Activated B cell treated with CpG ODN at 0.5 μM for 24 hours (primary cell): ENCODE measurements at regions of chr21 and their contacts with region 1.

Region 1: DNA sequence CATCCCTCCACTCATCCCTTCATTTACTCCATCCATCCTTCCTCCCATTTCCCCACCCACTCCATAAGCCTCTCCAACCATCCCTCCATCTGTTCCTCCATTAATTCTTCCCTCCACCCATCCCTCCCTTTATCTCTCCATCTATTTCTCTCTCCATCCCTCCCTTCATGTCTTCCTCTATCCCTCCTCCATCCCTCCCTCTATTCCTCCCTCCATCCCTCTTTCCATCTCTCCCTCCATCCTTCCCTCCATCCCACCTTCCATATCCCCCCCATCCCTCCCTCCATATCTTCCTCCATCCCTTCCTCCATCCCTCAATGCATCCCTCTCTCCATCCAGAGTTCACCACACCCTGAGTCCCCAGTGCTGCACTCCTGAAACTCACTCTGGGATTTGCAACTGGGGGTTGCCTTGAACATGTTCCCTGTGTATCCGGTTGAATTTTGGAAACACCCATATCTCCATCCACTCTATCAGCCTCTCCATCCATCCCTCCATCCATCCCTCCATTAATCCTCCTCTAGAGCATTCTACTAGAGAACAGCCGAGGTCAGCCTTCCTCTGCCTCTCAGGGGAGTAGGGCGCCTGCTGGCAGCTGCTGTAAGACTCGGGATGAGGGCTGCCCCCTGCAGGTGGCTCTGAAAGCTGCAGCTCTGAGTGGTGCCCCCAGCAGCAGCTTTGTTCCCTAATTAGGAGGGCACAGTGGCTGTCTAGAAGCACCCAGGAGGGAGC is 39.4 kb downstream of the ABCG1 start:
- DNase-seq: peak; percentile 73
- ATAC-seq: peak; percentile 97
- H3K4me3 Mint-ChIP-seq: peak overlapping the region; percentile 1
- H3K27ac Mint-ChIP-seq: no peak overlapping the region
- H3K4me1 Mint-ChIP-seq: peaks cover 43% of the 10 kb centered on the region
- H3K27me3 Mint-ChIP-seq: no peaks in the 10 kb centered on the region
- CTCF ChIP-seq: peak; percentile 78

Region 2: GRCh38 chr21:41768437-41769061 is 489.8 kb before region 1 on chr21:
- CTCF ChIA-PET with region 1: no interaction called
- POLR2A ChIA-PET with region 1: no interaction called
- intact Hi-C with region 1: no loop called
- DNase-seq: no peak
- ATAC-seq: no peak
- H3K4me3 Mint-ChIP-seq: peak overlapping the region; percentile 74
- H3K27ac Mint-ChIP-seq: no peak overlapping the region
- H3K4me1 Mint-ChIP-seq: peaks cover 22% of the 10 kb centered on the region
- H3K27me3 Mint-ChIP-seq: peaks cover 79% of the 10 kb centered on the region
- CTCF ChIP-seq: no peak

Region 3: GRCh38 chr21:42145569-42146272 is 112.6 kb before region 1 on chr21:
- CTCF ChIA-PET with region 1: interaction called, 103 read pairs
- POLR2A ChIA-PET with region 1: interaction called, 3 read pairs
- intact Hi-C with region 1: loop called (anchors 1 kb)
- DNase-seq: peak; percentile 36
- ATAC-seq: peak; percentile 86
- H3K4me3 Mint-ChIP-seq: no peak overlapping the region
- H3K27ac Mint-ChIP-seq: no peak overlapping the region
- H3K4me1 Mint-ChIP-seq: peaks cover 7% of the 10 kb centered on the region
- H3K27me3 Mint-ChIP-seq: no peaks in the 10 kb centered on the region
- CTCF ChIP-seq: no peak

Region 4: GRCh38 chr21:42164064-42164789 is 94.1 kb before region 1 on chr21:
- CTCF ChIA-PET with region 1: interaction called, 100 read pairs
- POLR2A ChIA-PET with region 1: no interaction called
- intact Hi-C with region 1: loop called (anchors 1 kb)
- DNase-seq: no peak
- ATAC-seq: peak; percentile 76
- H3K4me3 Mint-ChIP-seq: no peak overlapping the region
- H3K27ac Mint-ChIP-seq: no peak overlapping the region
- H3K4me1 Mint-ChIP-seq: peaks cover 14% of the 10 kb centered on the region
- H3K27me3 Mint-ChIP-seq: peaks cover 3% of the 10 kb centered on the region
- CTCF ChIP-seq: no peak

Region 5: GRCh38 chr21:42220138-42220701 is 38.1 kb before region 1 on chr21:
- CTCF ChIA-PET with region 1: interaction called, 14 read pairs
- POLR2A ChIA-PET with region 1: no interaction called
- intact Hi-C with region 1: loop called (anchors 2 kb)
- DNase-seq: peak; percentile 50
- ATAC-seq: peak; percentile 84
- H3K4me3 Mint-ChIP-seq: peak overlapping the region; percentile 87
- H3K27ac Mint-ChIP-seq: peak overlapping the region; percentile 73
- H3K4me1 Mint-ChIP-seq: peaks cover 39% of the 10 kb centered on the region
- H3K27me3 Mint-ChIP-seq: no peaks in the 10 kb centered on the region
- CTCF ChIP-seq: no peak

Region 6: GRCh38 chr21:42238185-42238934 is 20.0 kb before region 1 on chr21:
- CTCF ChIA-PET with region 1: interaction called, 18 read pairs
- POLR2A ChIA-PET with region 1: interaction called, 4 read pairs
- intact Hi-C with region 1: no loop called
- DNase-seq: no peak
- ATAC-seq: no peak
- H3K4me3 Mint-ChIP-seq: peak overlapping the region; percentile 9
- H3K27ac Mint-ChIP-seq: no peak overlapping the region
- H3K4me1 Mint-ChIP-seq: peaks cover 72% of the 10 kb centered on the region
- H3K27me3 Mint-ChIP-seq: no peaks in the 10 kb centered on the region
- CTCF ChIP-seq: no peak

Region 7: DNA sequence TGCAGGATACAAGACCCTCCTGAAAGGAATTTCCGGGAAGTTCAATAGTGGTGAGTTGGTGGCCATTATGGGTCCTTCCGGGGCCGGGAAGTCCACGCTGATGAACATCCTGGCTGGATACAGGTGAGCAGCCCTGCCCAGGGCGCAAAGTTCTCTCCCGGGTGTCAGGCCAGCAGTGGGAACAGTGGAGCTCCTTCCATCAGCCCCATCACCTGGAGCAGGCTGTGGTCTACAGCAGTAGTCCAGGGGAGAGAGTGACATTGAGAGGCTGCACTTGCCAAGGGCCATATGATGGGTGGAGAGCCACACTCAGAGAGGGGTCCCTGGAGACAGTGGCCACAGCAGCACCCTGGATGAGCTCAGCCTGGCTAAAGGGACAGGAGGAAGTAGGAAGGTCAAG is 12.7 kb after region 1 on chr21:
- CTCF ChIA-PET with region 1: interaction called, 15 read pairs
- POLR2A ChIA-PET with region 1: interaction called, 4 read pairs
- intact Hi-C with region 1: no loop called
- DNase-seq: no peak
- ATAC-seq: no peak
- H3K4me3 Mint-ChIP-seq: no peak overlapping the region
- H3K27ac Mint-ChIP-seq: no peak overlapping the region
- H3K4me1 Mint-ChIP-seq: peaks cover 35% of the 10 kb centered on the region
- H3K27me3 Mint-ChIP-seq: no peaks in the 10 kb centered on the region
- CTCF ChIP-seq: no peak